Breast epithelium (tissue), 4 donors: ENCODE measurements at regions of chr17 and their contacts with region 1.

Region 1: GRCh38 chr17:81961521-81962498 is 823 bp upstream of the NOTUM start:
- DNase-seq: no peak
- H3K4me3 ChIP-seq: peak overlapping the region in 1 of 3 donors; percentile 68
- H3K27ac ChIP-seq: no peak overlapping the region
- H3K4me1 ChIP-seq: peaks cover 0 to 12% of the 10 kb centered on the region in 2 donors
- H3K27me3 ChIP-seq: peaks cover 22 to 60% of the 10 kb centered on the region in 2 donors
- CTCF ChIP-seq: no peak
- POLR2A ChIP-seq: no peak

Region 2: DNA sequence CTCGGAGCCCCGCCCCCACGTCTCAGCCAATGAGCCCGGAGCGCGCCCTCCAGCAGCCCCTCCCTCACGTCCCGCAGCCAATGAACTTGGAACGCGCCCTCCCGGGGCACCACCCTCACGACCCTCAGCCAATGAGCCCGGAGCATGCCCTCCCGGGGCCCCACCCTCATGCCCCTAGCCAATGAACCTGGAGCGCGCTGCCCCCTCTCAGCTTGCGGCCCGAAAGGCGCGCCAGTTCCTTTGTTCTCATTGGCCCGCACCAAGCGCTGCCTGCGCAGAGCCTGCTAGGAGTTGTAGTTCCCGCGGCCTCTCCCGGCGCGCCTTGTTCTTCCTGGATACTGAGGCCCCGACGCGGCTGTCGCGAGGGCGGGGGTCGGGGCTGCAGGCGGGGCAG is 61.2 kb after region 1 on chr17 and contains the start of gene LRRC45:
- intact Hi-C with region 1: loop called (anchors 2 kb)
- DNase-seq: peak; percentile 100
- H3K4me3 ChIP-seq: peak within 1 kb of the TSS; percentile 85 to 90 (median 88)
- H3K27ac ChIP-seq: peak within 1 kb of the TSS; percentile 54 to 78
- H3K4me1 ChIP-seq: peaks cover 6 to 22% of the 10 kb centered on the region in 2 donors
- H3K27me3 ChIP-seq: no peaks in the 10 kb centered on the region
- CTCF ChIP-seq: no peak
- POLR2A ChIP-seq: no peak
- total RNA-seq, gene LRRC45: 8.0 to 18.7 (median 14.7) TPM